ENCODE measurements at regions of chr18 and their contacts with region 1.

Region 1: DNA sequence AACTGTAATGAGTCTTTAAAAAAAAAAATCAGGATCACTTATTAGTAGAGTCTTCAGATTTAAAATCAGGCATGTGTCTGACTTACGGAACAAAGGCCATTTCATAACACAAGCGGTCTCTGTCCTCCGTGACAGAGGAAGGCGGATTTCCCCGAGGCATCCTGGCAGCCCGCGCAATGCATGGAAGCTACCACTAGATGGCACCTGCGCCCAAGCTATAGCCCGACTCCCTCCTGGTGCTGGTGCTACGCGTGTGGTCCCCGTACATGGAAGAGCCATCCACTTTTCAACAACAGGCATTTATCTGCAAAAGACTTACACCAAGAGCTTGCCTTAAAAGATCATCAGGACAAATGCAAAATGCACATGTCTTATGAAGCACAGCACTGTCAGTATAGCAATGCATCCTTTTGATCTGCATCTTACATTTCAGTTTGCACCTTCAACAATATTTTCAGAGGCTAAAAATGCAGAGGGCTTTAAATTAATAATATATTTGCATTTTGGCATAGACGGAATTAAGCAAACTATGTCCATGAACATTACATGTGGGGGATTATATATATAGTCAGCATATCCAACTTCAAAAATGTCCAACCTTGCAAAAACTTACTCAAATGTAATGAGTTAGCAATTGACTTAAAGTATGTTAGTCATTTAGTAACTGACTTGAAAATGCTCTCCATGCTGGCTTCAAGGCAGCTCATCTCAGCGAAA is 96.0 kb downstream of the ZNF516 start:
- DNase-seq: peak; percentile 76
- H3K4me3 Mint-ChIP-seq: no peak overlapping the region
- H3K27ac Mint-ChIP-seq: no peak overlapping the region
- H3K4me1 Mint-ChIP-seq: peaks cover 12% of the 10 kb centered on the region
- H3K27me3 Mint-ChIP-seq: no peaks in the 10 kb centered on the region
- CTCF ChIP-seq: peak; percentile 91

Region 2: DNA sequence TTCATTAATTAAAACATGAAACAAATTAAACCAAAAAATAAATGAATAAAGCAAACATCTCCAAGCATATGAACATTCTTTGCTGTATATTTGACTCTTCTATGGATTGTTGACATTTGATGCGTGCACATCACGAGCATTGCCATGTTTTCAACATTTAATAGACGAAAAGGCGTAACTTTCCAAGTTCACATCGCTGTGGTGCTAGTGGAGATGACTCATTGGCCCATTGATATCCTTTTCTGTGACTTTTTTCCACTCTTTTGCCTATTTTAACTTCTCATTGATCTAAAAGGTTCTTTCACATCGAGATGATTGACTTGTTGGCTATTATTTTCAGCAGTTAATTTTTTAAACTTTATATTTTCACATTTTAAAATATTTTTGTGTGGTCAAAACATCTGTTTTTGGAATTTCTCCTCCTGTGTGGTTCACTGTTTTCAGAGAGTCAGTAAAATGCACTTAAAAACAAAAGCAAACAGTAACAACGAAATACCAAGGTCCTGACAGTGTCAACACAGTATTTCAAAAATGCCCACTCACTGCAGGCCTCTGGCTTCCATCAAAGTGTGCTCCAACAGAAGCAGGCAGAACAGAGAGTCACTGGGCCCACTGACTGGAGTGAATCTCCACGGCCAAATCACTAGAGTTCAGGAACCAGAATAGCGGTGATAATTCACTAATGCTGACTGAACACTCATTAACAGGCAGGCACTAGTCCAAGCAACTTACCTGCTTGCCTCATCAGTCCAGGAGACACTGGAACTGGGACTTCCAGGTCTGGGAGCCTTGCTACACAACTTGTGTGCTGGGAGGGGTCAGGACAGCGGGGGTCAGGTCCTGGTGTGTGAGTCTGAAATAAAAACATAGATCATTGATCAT is 599.4 kb before region 1 on chr18:
- CTCF ChIA-PET with region 1: no interaction called
- POLR2A ChIA-PET with region 1: no interaction called
- intact Hi-C with region 1: no loop called
- DNase-seq: no peak
- H3K4me3 Mint-ChIP-seq: no peak overlapping the region
- H3K27ac Mint-ChIP-seq: no peak overlapping the region
- H3K4me1 Mint-ChIP-seq: no peaks in the 10 kb centered on the region
- H3K27me3 Mint-ChIP-seq: no peaks in the 10 kb centered on the region
- CTCF ChIP-seq: no peak

Region 3: GRCh38 chr18:76213991-76214390 is 185.1 kb before region 1 on chr18:
- CTCF ChIA-PET with region 1: no interaction called
- POLR2A ChIA-PET with region 1: no interaction called
- intact Hi-C with region 1: no loop called
- DNase-seq: no peak
- H3K4me3 Mint-ChIP-seq: no peak overlapping the region
- H3K27ac Mint-ChIP-seq: no peak overlapping the region
- H3K4me1 Mint-ChIP-seq: peaks cover 12% of the 10 kb centered on the region
- H3K27me3 Mint-ChIP-seq: no peaks in the 10 kb centered on the region
- CTCF ChIP-seq: no peak

Region 4: DNA sequence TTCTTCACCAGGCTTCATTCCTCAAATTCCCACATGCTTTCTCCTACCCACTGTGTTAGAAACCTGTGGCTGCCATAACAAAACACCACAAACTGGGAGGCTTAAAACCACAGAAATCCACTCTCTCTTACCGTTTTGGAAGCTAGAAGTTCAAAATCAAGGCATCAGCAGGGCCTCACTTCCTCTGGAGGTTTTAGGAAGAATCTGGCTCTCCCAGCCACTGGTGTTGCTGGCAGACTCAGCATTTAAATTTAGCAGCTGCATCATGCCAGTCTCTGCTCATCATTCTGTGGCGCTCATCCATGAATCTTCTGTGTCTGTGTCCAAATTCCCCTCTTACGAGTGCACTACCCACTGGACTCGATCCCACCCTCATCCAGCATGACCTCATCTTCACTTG is 152.5 kb before region 1 on chr18:
- CTCF ChIA-PET with region 1: no interaction called
- POLR2A ChIA-PET with region 1: no interaction called
- intact Hi-C with region 1: no loop called
- DNase-seq: no peak
- H3K4me3 Mint-ChIP-seq: no peak overlapping the region
- H3K27ac Mint-ChIP-seq: no peak overlapping the region
- H3K4me1 Mint-ChIP-seq: no peaks in the 10 kb centered on the region
- H3K27me3 Mint-ChIP-seq: no peaks in the 10 kb centered on the region
- CTCF ChIP-seq: no peak

Region 5: DNA sequence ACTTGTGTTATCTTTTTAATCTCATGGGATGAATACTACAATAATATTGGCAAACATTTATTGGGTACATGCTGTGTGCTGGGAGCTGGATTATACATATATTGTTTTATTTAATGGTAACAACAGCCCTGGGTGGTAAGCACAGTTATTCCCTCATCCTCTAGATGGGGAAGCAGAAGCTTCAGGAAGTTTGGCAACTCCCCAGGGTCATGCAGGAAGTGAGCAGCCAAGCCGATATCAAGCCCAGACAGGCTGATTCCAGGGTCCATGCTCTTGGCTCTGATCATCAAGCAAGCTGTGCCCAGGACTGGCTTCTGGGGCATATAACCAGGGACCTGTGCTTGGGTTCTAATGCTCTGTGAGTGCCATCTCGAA is 59.8 kb before region 1 on chr18:
- CTCF ChIA-PET with region 1: no interaction called
- POLR2A ChIA-PET with region 1: no interaction called
- intact Hi-C with region 1: no loop called
- DNase-seq: peak; percentile 38
- H3K4me3 Mint-ChIP-seq: no peak overlapping the region
- H3K27ac Mint-ChIP-seq: no peak overlapping the region
- H3K4me1 Mint-ChIP-seq: no peaks in the 10 kb centered on the region
- H3K27me3 Mint-ChIP-seq: no peaks in the 10 kb centered on the region
- CTCF ChIP-seq: no peak

Region 6: GRCh38 chr18:76410033-76410432 is 11.0 kb after region 1 on chr18:
- CTCF ChIA-PET with region 1: interaction called, 10 read pairs
- POLR2A ChIA-PET with region 1: interaction called, 4 read pairs
- intact Hi-C with region 1: no loop called
- DNase-seq: no peak
- H3K4me3 Mint-ChIP-seq: no peak overlapping the region
- H3K27ac Mint-ChIP-seq: no peak overlapping the region
- H3K4me1 Mint-ChIP-seq: peaks cover 9% of the 10 kb centered on the region
- H3K27me3 Mint-ChIP-seq: no peaks in the 10 kb centered on the region
- CTCF ChIP-seq: no peak

Region 7: DNA sequence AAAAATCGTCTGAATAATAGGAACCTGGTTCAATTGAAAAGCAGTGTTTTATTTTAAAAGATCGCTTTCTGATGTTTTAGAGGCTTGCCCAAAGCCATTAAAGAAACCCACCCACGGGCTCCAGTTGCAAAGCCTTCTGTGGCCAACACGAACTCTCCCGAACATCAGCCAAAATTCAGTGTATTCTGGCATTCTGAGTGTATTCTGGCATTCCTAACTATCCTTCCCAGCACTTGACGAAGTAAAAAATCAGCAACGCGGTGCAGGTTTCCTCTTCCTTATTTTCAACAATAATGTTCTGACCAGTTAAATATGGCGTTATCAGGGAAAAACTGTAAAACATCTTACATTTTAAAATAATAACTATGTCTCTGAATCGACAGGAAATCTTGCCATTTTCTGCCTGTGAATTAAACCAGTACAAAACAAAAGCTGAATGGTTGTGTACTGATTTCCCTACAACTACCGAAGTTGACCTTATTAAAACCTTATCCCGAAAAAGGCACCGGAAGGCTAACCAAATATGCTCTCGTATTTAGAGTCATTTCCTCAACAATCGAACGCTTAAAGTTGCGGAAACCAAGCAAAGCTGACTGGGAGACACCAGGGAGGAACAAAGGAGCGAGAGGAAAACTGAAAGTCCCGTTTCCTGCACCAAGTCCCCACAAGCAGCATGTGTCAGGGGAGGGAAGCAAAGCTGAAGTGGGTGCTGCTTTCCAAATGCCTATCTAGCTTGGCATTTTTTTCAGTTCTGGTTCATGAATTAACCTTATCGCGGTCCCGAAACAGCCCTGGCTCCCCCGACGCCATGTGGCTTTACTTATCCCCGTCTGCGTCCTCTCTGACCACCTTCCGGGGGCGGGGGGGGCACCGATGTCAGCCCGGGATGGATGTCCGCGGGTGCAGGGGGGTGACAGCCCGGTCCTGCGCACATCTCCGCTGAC is 51.7 kb after region 1 on chr18:
- CTCF ChIA-PET with region 1: interaction called, 6 read pairs
- POLR2A ChIA-PET with region 1: no interaction called
- intact Hi-C with region 1: loop called (anchors 2 kb)
- DNase-seq: peak; percentile 53
- H3K4me3 Mint-ChIP-seq: peak overlapping the region; percentile 84
- H3K27ac Mint-ChIP-seq: peak overlapping the region; percentile 98
- H3K4me1 Mint-ChIP-seq: peaks cover 57% of the 10 kb centered on the region
- H3K27me3 Mint-ChIP-seq: no peaks in the 10 kb centered on the region
- CTCF ChIP-seq: no peak

Region 8: GRCh38 chr18:76620321-76621170 is 221.5 kb after region 1 on chr18:
- CTCF ChIA-PET with region 1: interaction called, 43 read pairs
- POLR2A ChIA-PET with region 1: interaction called, 3 read pairs
- intact Hi-C with region 1: loop called (anchors 1 kb)
- DNase-seq: peak; percentile 81
- H3K4me3 Mint-ChIP-seq: peak overlapping the region; percentile 62
- H3K27ac Mint-ChIP-seq: peak overlapping the region; percentile 94
- H3K4me1 Mint-ChIP-seq: peaks cover 29% of the 10 kb centered on the region
- H3K27me3 Mint-ChIP-seq: no peaks in the 10 kb centered on the region
- CTCF ChIP-seq: peak; percentile 70

Region 9: DNA sequence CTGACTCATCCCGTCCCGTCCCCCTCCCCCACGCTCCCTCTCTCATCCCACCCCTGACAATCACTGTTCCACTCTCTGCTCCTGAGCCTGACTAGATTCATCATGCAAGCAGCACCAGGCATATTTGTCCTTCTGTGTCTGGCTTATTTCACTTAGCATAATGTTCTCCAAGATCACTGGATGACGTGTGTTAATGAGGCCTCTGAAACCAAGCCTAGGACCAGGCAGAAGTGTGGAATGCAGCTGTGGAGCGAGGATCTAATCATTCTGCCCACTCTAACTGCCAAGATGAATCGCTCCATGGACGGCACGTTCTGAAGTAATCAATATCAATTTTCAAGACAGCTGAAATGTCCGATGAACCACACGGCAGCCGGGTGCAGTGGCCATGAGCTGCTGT is 300.9 kb after region 1 on chr18:
- CTCF ChIA-PET with region 1: interaction called, 23 read pairs
- POLR2A ChIA-PET with region 1: no interaction called
- intact Hi-C with region 1: no loop called
- DNase-seq: no peak
- H3K4me3 Mint-ChIP-seq: no peak overlapping the region
- H3K27ac Mint-ChIP-seq: no peak overlapping the region
- H3K4me1 Mint-ChIP-seq: no peaks in the 10 kb centered on the region
- H3K27me3 Mint-ChIP-seq: peaks cover 26% of the 10 kb centered on the region
- CTCF ChIP-seq: no peak